Caco-2 (cell line): ENCODE measurements at regions of chr5 and their contacts with region 1.

Region 1: GRCh38 chr5:97044052-97044451 is 98.4 kb downstream of the LIX1 start:
- DNase-seq: peak; percentile 62 to 67
- H3K4me3 ChIP-seq: no peak overlapping the region
- H3K4me3 Mint-ChIP-seq: no peak overlapping the region
- H3K27ac Mint-ChIP-seq: peak overlapping the region; percentile 90
- H3K4me1 ChIP-seq: peaks cover 28% of the 10 kb centered on the region
- H3K4me1 Mint-ChIP-seq: peaks cover 37% of the 10 kb centered on the region
- H3K27me3 ChIP-seq: no peaks in the 10 kb centered on the region
- H3K27me3 Mint-ChIP-seq: no peaks in the 10 kb centered on the region
- CTCF ChIP-seq: peak; percentile 38 to 60

Region 2: GRCh38 chr5:96876292-96876850 is 167.7 kb before region 1 on chr5 and contains the start of gene ERAP2:
- CTCF ChIA-PET with region 1: no interaction called
- POLR2A ChIA-PET with region 1: no interaction called
- intact Hi-C with region 1: loop called (anchors 1 kb)
- DNase-seq: no peak
- H3K4me3 ChIP-seq: peak within 1 kb of the TSS; percentile 27
- H3K4me3 Mint-ChIP-seq: peak within 1 kb of the TSS; percentile 65
- H3K27ac Mint-ChIP-seq: peak within 1 kb of the TSS; percentile 56
- H3K4me1 ChIP-seq: peaks cover 7% of the 10 kb centered on the region; the same call in 1 of the 2 replicates
- H3K4me1 Mint-ChIP-seq: peaks cover 26% of the 10 kb centered on the region
- H3K27me3 ChIP-seq: no peaks in the 10 kb centered on the region
- H3K27me3 Mint-ChIP-seq: no peaks in the 10 kb centered on the region
- CTCF ChIP-seq: no peak
- total RNA-seq, gene ERAP2: 3.9 and 4.5 TPM in 2 replicates

Region 3: GRCh38 chr5:96997265-96997859 is 46.7 kb before region 1 on chr5:
- CTCF ChIA-PET with region 1: interaction called, 14 read pairs
- POLR2A ChIA-PET with region 1: no interaction called
- intact Hi-C with region 1: loop called (anchors 5 kb)
- DNase-seq: peak in 1 of 2 experiments; percentile 32
- H3K4me3 ChIP-seq: no peak overlapping the region
- H3K4me3 Mint-ChIP-seq: no peak overlapping the region
- H3K27ac Mint-ChIP-seq: no peak overlapping the region
- H3K4me1 ChIP-seq: peaks cover 4% of the 10 kb centered on the region
- H3K4me1 Mint-ChIP-seq: peaks cover 18% of the 10 kb centered on the region
- H3K27me3 ChIP-seq: no peaks in the 10 kb centered on the region
- H3K27me3 Mint-ChIP-seq: no peaks in the 10 kb centered on the region
- CTCF ChIP-seq: peak; percentile 47 to 49

Region 4: GRCh38 chr5:97078958-97079743 is 35.1 kb after region 1 on chr5:
- CTCF ChIA-PET with region 1: no interaction called
- POLR2A ChIA-PET with region 1: no interaction called
- intact Hi-C with region 1: loop called (anchors 5 kb)
- DNase-seq: no peak
- H3K4me3 ChIP-seq: no peak overlapping the region
- H3K4me3 Mint-ChIP-seq: no peak overlapping the region
- H3K27ac Mint-ChIP-seq: no peak overlapping the region
- H3K4me1 ChIP-seq: peaks cover 29% of the 10 kb centered on the region
- H3K4me1 Mint-ChIP-seq: peaks cover 25% of the 10 kb centered on the region
- H3K27me3 ChIP-seq: no peaks in the 10 kb centered on the region
- H3K27me3 Mint-ChIP-seq: no peaks in the 10 kb centered on the region
- CTCF ChIP-seq: no peak

Region 5: DNA sequence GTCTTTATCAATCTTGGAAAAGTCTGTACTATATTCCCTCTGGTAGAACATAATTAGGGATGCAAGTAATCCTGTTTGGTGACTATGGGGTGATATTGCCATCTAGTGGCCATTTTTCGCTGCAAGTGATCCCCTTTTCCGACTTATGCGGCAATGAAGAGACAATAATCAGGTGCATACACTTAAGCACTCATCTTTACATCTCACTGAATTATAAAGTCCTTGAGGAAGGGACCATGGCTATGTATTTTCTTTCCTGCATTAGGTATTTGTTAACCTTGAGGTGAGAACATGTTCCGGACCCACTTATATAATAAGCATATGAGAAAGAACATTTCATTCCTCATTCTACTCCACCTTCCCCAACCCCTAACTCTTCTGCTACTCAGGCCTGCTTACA is 118.0 kb after region 1 on chr5:
- CTCF ChIA-PET with region 1: interaction called, 5 read pairs
- POLR2A ChIA-PET with region 1: no interaction called
- intact Hi-C with region 1: loop called (anchors 1 kb)
- DNase-seq: peak; percentile 70 to 78
- H3K4me3 ChIP-seq: no peak overlapping the region
- H3K4me3 Mint-ChIP-seq: no peak overlapping the region
- H3K27ac Mint-ChIP-seq: no peak overlapping the region
- H3K4me1 ChIP-seq: peaks cover 14% of the 10 kb centered on the region
- H3K4me1 Mint-ChIP-seq: peaks cover 5% of the 10 kb centered on the region
- H3K27me3 ChIP-seq: no peaks in the 10 kb centered on the region
- H3K27me3 Mint-ChIP-seq: no peaks in the 10 kb centered on the region
- CTCF ChIP-seq: peak; percentile 85 to 89